Left ventricle myocardium inferior (tissue), 1 donor: ENCODE measurements at regions of chr3 and their contacts with region 1.

Region 1: GRCh38 chr3:33717866-33718594 is at the start of gene CLASP2:
- DNase-seq: peak; percentile 89
- H3K4me3 ChIP-seq: peak within 1 kb of the TSS; percentile 85
- H3K27ac ChIP-seq: peak within 1 kb of the TSS; percentile 97
- H3K4me1 ChIP-seq: peaks cover 48% of the 10 kb centered on the region
- H3K27me3 ChIP-seq: no peaks in the 10 kb centered on the region
- CTCF ChIP-seq: no peak
- total RNA-seq, gene CLASP2: 75.0 TPM

Region 2: GRCh38 chr3:33392703-33393125 is 325.3 kb before region 1 on chr3:
- intact Hi-C with region 1: no loop called
- DNase-seq: no peak
- H3K4me3 ChIP-seq: no peak overlapping the region
- H3K27ac ChIP-seq: no peak overlapping the region
- H3K4me1 ChIP-seq: peaks cover 26% of the 10 kb centered on the region
- H3K27me3 ChIP-seq: no peaks in the 10 kb centered on the region
- CTCF ChIP-seq: no peak

Region 3: GRCh38 chr3:33658991-33659848 is 58.8 kb before region 1 on chr3:
- intact Hi-C with region 1: loop called (anchors 10 kb)
- DNase-seq: peak; percentile 76
- H3K4me3 ChIP-seq: peak overlapping the region; percentile 68
- H3K27ac ChIP-seq: peak overlapping the region; percentile 87
- H3K4me1 ChIP-seq: peaks cover 54% of the 10 kb centered on the region
- H3K27me3 ChIP-seq: no peaks in the 10 kb centered on the region
- CTCF ChIP-seq: no peak

Region 4: GRCh38 chr3:33848624-33849347 is 130.8 kb after region 1 on chr3:
- intact Hi-C with region 1: no loop called
- DNase-seq: no peak
- H3K4me3 ChIP-seq: no peak overlapping the region
- H3K27ac ChIP-seq: no peak overlapping the region
- H3K4me1 ChIP-seq: peaks cover 14% of the 10 kb centered on the region
- H3K27me3 ChIP-seq: no peaks in the 10 kb centered on the region
- CTCF ChIP-seq: no peak